B cell (primary cell): ENCODE measurements at regions of chr15 and their contacts with region 1.

Region 1: GRCh38 chr15:60916679-60917460 is 312.2 kb downstream of the RORA start:
- DNase-seq: peak; percentile 86
- ATAC-seq: peak; percentile 95
- H3K4me3 ChIP-seq: no peak overlapping the region
- H3K4me3 Mint-ChIP-seq: no peak overlapping the region
- H3K27ac ChIP-seq: peak overlapping the region in 1 of 2 donors; percentile 12
- H3K27ac Mint-ChIP-seq: no peak overlapping the region
- H3K4me1 ChIP-seq: peaks cover 11 to 13% of the 10 kb centered on the region in 2 donors
- H3K4me1 Mint-ChIP-seq: peaks cover 14% of the 10 kb centered on the region
- H3K27me3 ChIP-seq: peaks cover 0 to 2% (median 0%) of the 10 kb centered on the region in 4 experiments
- H3K27me3 Mint-ChIP-seq: no peaks in the 10 kb centered on the region
- CTCF ChIP-seq: peak; percentile 86

Region 2: GRCh38 chr15:59941612-59942011 is 975.3 kb before region 1 on chr15:
- CTCF ChIA-PET with region 1: no interaction called
- POLR2A ChIA-PET with region 1: no interaction called
- intact Hi-C with region 1: no loop called
- DNase-seq: no peak
- ATAC-seq: no peak
- H3K4me3 ChIP-seq: no peak overlapping the region
- H3K4me3 Mint-ChIP-seq: no peak overlapping the region
- H3K27ac ChIP-seq: no peak overlapping the region
- H3K27ac Mint-ChIP-seq: no peak overlapping the region
- H3K4me1 ChIP-seq: no peaks in the 10 kb centered on the region
- H3K4me1 Mint-ChIP-seq: no peaks in the 10 kb centered on the region
- H3K27me3 ChIP-seq: no peaks in the 10 kb centered on the region
- H3K27me3 Mint-ChIP-seq: peaks cover 18% of the 10 kb centered on the region
- CTCF ChIP-seq: no peak

Region 3: GRCh38 chr15:60585743-60586708 is 330.8 kb before region 1 on chr15:
- CTCF ChIA-PET with region 1: interaction called, 218 read pairs
- POLR2A ChIA-PET with region 1: interaction called, 4 read pairs
- intact Hi-C with region 1: loop called (anchors 1 kb)
- DNase-seq: peak; percentile 79
- ATAC-seq: peak; percentile 75
- H3K4me3 ChIP-seq: no peak overlapping the region
- H3K4me3 Mint-ChIP-seq: no peak overlapping the region
- H3K27ac ChIP-seq: no peak overlapping the region
- H3K27ac Mint-ChIP-seq: no peak overlapping the region
- H3K4me1 ChIP-seq: peaks cover 4 to 18% of the 10 kb centered on the region in 2 donors
- H3K4me1 Mint-ChIP-seq: peaks cover 18% of the 10 kb centered on the region
- H3K27me3 ChIP-seq: peaks cover 2 to 26% (median 17%) of the 10 kb centered on the region in 4 experiments
- H3K27me3 Mint-ChIP-seq: peaks cover 22% of the 10 kb centered on the region
- CTCF ChIP-seq: peak; percentile 97

Region 4: GRCh38 chr15:60592371-60593169 is 324.3 kb before region 1 on chr15:
- CTCF ChIA-PET with region 1: interaction called, 218 read pairs
- POLR2A ChIA-PET with region 1: no interaction called
- intact Hi-C with region 1: no loop called
- DNase-seq: peak; percentile 83
- ATAC-seq: peak; percentile 86
- H3K4me3 ChIP-seq: peak overlapping the region in 4 of 5 experiments; percentile 38 to 70 (median 62)
- H3K4me3 Mint-ChIP-seq: peak overlapping the region; percentile 85
- H3K27ac ChIP-seq: no peak overlapping the region
- H3K27ac Mint-ChIP-seq: peak overlapping the region; percentile 70
- H3K4me1 ChIP-seq: peaks cover 11 to 13% of the 10 kb centered on the region in 2 donors
- H3K4me1 Mint-ChIP-seq: peaks cover 10% of the 10 kb centered on the region
- H3K27me3 ChIP-seq: peaks cover 0 to 33% (median 23%) of the 10 kb centered on the region in 4 experiments
- H3K27me3 Mint-ChIP-seq: peaks cover 41% of the 10 kb centered on the region
- CTCF ChIP-seq: peak; percentile 10

Region 5: GRCh38 chr15:60901647-60902046 is 15.2 kb before region 1 on chr15:
- CTCF ChIA-PET with region 1: interaction called, 10 read pairs
- POLR2A ChIA-PET with region 1: no interaction called
- intact Hi-C with region 1: no loop called
- DNase-seq: no peak
- ATAC-seq: no peak
- H3K4me3 ChIP-seq: no peak overlapping the region
- H3K4me3 Mint-ChIP-seq: no peak overlapping the region
- H3K27ac ChIP-seq: no peak overlapping the region
- H3K27ac Mint-ChIP-seq: no peak overlapping the region
- H3K4me1 ChIP-seq: no peaks in the 10 kb centered on the region
- H3K4me1 Mint-ChIP-seq: peaks cover 6% of the 10 kb centered on the region
- H3K27me3 ChIP-seq: no peaks in the 10 kb centered on the region
- H3K27me3 Mint-ChIP-seq: no peaks in the 10 kb centered on the region
- CTCF ChIP-seq: no peak